Activated CD4-positive, alpha-beta T cell treated with anti-CD3 and anti-CD28 coated beads, Interleukin-2, amount 10 ng/mL, durations not matched to agents 24 days and 14 days (primary cell): ENCODE measurements at regions of chr3 and their contacts with region 1.

Region 1: GRCh38 chr3:64484289-64484992 is 203.4 kb downstream of the ADAMTS9 start:
- DNase-seq: peak; percentile 91
- H3K4me3 Mint-ChIP-seq: no peak overlapping the region
- H3K27ac Mint-ChIP-seq: no peak overlapping the region
- H3K4me1 Mint-ChIP-seq: peaks cover 2% of the 10 kb centered on the region
- H3K27me3 Mint-ChIP-seq: peaks cover 11% of the 10 kb centered on the region

Region 2: GRCh38 chr3:64030741-64031140 is 453.7 kb before region 1 on chr3:
- intact Hi-C with region 1: loop called (anchors 1 kb)
- DNase-seq: peak; percentile 93
- H3K4me3 Mint-ChIP-seq: peak overlapping the region; percentile 76
- H3K27ac Mint-ChIP-seq: peak overlapping the region; percentile 62
- H3K4me1 Mint-ChIP-seq: peaks cover 11% of the 10 kb centered on the region
- H3K27me3 Mint-ChIP-seq: peaks cover 44% of the 10 kb centered on the region

Region 3: DNA sequence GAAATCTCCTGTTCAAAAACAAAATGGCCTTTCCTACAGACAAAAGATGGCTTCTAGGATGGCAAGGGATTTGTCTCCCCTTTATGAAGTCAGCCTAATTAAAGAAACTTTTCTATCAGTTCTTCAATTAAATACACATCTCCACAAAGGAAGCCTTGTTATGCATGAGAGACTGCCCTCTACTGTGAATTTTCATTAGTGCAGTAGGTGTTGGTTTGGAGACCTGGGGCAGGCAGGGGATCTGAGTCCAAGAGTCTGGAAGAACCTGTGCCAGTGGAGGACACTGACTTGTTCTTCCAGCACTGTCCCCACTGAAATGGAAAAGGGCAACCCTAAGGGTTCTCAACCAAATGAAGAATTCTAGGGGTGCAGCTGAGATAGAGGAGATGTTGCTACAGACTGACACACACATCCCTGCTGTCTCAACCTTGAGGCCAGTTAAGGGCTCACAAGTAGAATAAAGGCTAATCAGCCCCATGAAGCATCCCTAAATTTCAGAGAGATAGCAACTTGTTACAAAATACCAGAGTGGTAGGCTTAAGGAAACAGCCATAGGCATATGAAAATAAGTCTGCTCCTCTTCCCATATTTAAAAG is 85.1 kb before region 1 on chr3:
- intact Hi-C with region 1: loop called (anchors 2 kb)
- DNase-seq: peak; percentile 78
- H3K4me3 Mint-ChIP-seq: no peak overlapping the region
- H3K27ac Mint-ChIP-seq: no peak overlapping the region
- H3K4me1 Mint-ChIP-seq: no peaks in the 10 kb centered on the region
- H3K27me3 Mint-ChIP-seq: no peaks in the 10 kb centered on the region